ENCODE measurements at regions of chr7 and their contacts with region 1.

Region 1: GRCh38 chr7:89622838-89623672 is 531.2 kb upstream of the STEAP1 start:
- DNase-seq: peak in 7 of 9 donors; percentile 23 to 61 (median 53)
- ATAC-seq: peak; percentile 82
- H3K4me3 ChIP-seq: no peak overlapping the region
- H3K4me3 Mint-ChIP-seq: peak overlapping the region in 9 of 10 donors; percentile 21 to 70 (median 49)
- H3K27ac ChIP-seq: no peak overlapping the region
- H3K27ac Mint-ChIP-seq: peak overlapping the region in 5 of 9 donors; percentile 6 to 80 (median 35)
- H3K4me1 ChIP-seq: peaks cover 0 to 16% of the 10 kb centered on the region in 2 donors
- H3K4me1 Mint-ChIP-seq: peaks cover 18 to 40% (median 35%) of the 10 kb centered on the region in 7 donors
- H3K27me3 ChIP-seq: no peaks in the 10 kb centered on the region
- H3K27me3 Mint-ChIP-seq: peaks cover 0 to 7% (median 0%) of the 10 kb centered on the region in 5 donors

Region 2: GRCh38 chr7:88789480-88790064 is 833.5 kb before region 1 on chr7:
- CTCF ChIA-PET with region 1: interaction called, 14 read pairs
- POLR2A ChIA-PET with region 1: no interaction called
- intact Hi-C with region 1: loop called (anchors 1 kb)
- DNase-seq: peak in 6 of 9 donors; percentile 1 to 42 (median 33)
- ATAC-seq: no peak
- H3K4me3 ChIP-seq: no peak overlapping the region
- H3K4me3 Mint-ChIP-seq: no peak overlapping the region
- H3K27ac ChIP-seq: no peak overlapping the region
- H3K27ac Mint-ChIP-seq: no peak overlapping the region
- H3K4me1 ChIP-seq: no peaks in the 10 kb centered on the region
- H3K4me1 Mint-ChIP-seq: no peaks in the 10 kb centered on the region
- H3K27me3 ChIP-seq: no peaks in the 10 kb centered on the region
- H3K27me3 Mint-ChIP-seq: no peaks in the 10 kb centered on the region

Region 3: DNA sequence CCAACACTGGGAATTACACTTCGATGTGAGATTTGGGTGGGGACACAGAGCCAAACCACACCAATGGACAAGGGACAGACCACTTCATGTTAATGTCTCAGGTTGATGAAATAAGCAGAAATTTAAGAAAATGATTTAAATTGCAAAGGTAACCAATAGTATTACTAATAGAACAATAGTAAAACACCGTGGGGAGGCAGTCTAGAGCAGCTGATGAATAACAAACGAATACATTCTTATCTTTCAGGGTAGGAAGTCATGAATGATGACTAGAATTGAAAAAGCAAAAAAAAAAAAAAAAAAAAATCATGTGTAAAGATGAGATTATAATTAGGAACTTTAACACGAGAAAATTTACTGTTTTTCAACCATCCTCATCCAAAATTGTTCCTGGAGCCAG is 655.6 kb before region 1 on chr7:
- CTCF ChIA-PET with region 1: no interaction called
- POLR2A ChIA-PET with region 1: no interaction called
- intact Hi-C with region 1: loop called (anchors 1 to 5 kb)
- DNase-seq: no peak
- ATAC-seq: no peak
- H3K4me3 ChIP-seq: no peak overlapping the region
- H3K4me3 Mint-ChIP-seq: no peak overlapping the region
- H3K27ac ChIP-seq: no peak overlapping the region
- H3K27ac Mint-ChIP-seq: no peak overlapping the region
- H3K4me1 ChIP-seq: no peaks in the 10 kb centered on the region
- H3K4me1 Mint-ChIP-seq: no peaks in the 10 kb centered on the region
- H3K27me3 ChIP-seq: no peaks in the 10 kb centered on the region
- H3K27me3 Mint-ChIP-seq: no peaks in the 10 kb centered on the region

Region 4: DNA sequence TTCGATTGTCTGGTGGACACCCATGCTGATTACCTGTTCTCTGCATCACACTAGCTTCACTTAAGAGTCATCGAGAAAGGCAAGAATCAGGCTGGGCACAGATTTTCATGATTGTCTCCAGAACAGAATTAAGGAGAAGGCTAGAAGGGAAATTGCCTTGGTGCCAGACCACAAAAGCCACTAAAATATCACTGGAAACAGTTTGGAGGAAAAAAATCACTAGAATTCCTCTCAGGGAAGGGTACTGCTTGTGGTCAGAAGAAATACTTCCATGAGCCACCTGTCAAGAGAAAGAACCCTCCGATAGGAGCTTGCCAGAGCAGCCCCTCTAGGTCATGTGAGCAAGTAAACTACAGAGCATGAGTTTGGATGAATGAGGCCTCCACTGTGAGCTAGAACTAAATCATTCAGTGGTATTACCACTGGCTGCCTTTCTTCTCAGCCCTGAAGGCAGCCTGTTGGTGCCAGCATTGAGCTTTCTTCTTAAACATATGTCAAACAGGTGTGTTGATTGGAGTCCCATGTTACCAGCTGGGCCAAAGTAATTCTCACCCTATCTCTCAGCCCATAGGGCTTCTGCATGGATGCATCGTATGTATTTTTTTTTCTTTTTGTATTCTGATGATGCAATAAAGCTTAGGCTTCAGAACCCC is 558.1 kb before region 1 on chr7:
- CTCF ChIA-PET with region 1: no interaction called
- POLR2A ChIA-PET with region 1: no interaction called
- intact Hi-C with region 1: loop called in 1 of 2 experiments (anchors 2 kb)
- DNase-seq: no peak
- ATAC-seq: no peak
- H3K4me3 ChIP-seq: no peak overlapping the region
- H3K4me3 Mint-ChIP-seq: no peak overlapping the region
- H3K27ac ChIP-seq: no peak overlapping the region
- H3K27ac Mint-ChIP-seq: no peak overlapping the region
- H3K4me1 ChIP-seq: no peaks in the 10 kb centered on the region
- H3K4me1 Mint-ChIP-seq: no peaks in the 10 kb centered on the region
- H3K27me3 ChIP-seq: no peaks in the 10 kb centered on the region
- H3K27me3 Mint-ChIP-seq: no peaks in the 10 kb centered on the region

Region 5: GRCh38 chr7:89357121-89357520 is 265.9 kb before region 1 on chr7:
- CTCF ChIA-PET with region 1: interaction called, 7 read pairs
- POLR2A ChIA-PET with region 1: no interaction called
- intact Hi-C with region 1: loop called in 1 of 2 experiments (anchors 5 kb)
- DNase-seq: peak in 5 of 9 donors; percentile 0 to 17 (median 2)
- ATAC-seq: no peak
- H3K4me3 ChIP-seq: no peak overlapping the region
- H3K4me3 Mint-ChIP-seq: peak overlapping the region in 5 of 10 donors; percentile 2 to 26 (median 9)
- H3K27ac ChIP-seq: no peak overlapping the region
- H3K27ac Mint-ChIP-seq: peak overlapping the region in 1 of 9 donors; percentile 12
- H3K4me1 ChIP-seq: peaks cover 0 to 7% of the 10 kb centered on the region in 2 donors
- H3K4me1 Mint-ChIP-seq: peaks cover 6 to 25% (median 16%) of the 10 kb centered on the region in 7 donors
- H3K27me3 ChIP-seq: no peaks in the 10 kb centered on the region
- H3K27me3 Mint-ChIP-seq: no peaks in the 10 kb centered on the region

Measured in naive thymus-derived CD4-positive, alpha-beta T cell (primary cell).